Activated CD4-positive, alpha-beta T cell treated with anti-CD3 and anti-CD28 coated beads for 36 hours (primary cell): ENCODE measurements at regions of chr7 and their contacts with region 1.

Region 1: DNA sequence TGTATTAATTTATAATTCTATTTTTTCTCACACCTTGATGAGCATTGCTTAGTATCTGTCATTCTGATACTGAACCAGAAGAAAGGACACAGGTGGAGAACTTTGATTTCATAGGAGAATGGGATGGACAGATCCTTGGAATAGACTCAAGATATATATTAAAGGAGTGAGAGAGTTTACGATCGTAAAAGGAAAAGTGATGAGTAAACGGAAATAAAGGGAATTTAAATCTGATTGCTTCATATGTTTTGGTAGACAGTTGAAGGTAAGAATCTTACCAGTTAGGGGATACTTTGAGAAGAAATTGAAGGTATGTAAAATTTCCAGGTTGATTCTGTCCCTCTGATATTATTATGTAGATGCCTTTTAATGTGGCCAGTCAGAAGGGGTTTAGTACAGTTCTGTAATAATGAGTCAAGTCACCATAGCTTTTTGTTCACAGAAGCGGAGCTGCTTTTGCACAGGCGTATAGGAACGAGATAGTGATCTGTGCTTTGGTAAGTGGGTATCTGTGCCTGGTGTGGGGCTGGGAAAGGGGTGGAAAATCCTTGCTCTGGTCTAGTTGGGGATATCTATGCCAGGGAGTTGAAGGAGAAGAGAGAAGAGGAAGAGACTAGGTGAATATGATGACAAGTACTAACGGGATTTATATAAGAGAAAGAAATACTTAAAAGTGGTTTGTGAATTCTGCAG is 15.4 kb downstream of the SP4 start:
- DNase-seq: no peak
- ATAC-seq: no peak
- H3K4me3 Mint-ChIP-seq: no peak overlapping the region
- H3K27ac Mint-ChIP-seq: no peak overlapping the region
- H3K4me1 Mint-ChIP-seq: peaks cover 37% of the 10 kb centered on the region
- H3K27me3 Mint-ChIP-seq: no peaks in the 10 kb centered on the region

Region 2: DNA sequence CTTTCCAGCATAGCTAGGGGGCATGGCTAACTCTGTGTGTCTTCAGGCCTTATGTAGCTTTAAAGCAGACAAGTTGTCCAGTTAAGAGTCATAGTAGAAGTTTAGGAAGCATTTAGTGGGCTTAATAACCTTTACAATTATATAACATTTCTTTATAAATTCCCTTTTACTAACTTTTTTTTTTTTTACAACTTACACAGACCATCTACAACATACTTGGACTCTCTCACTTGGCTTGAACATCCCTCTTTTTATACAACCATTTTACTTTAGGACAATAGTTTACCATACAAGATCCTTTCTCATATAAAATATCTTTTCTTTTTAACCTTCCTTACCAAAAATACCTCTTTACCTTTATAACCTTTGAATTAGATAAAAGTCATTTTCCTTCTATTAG is 10.9 kb after region 1 on chr7:
- CTCF ChIA-PET with region 1: interaction called, 11 read pairs
- POLR2A ChIA-PET with region 1: no interaction called
- intact Hi-C with region 1: no loop called
- DNase-seq: no peak
- ATAC-seq: no peak
- H3K4me3 Mint-ChIP-seq: no peak overlapping the region
- H3K27ac Mint-ChIP-seq: no peak overlapping the region
- H3K4me1 Mint-ChIP-seq: peaks cover 12% of the 10 kb centered on the region
- H3K27me3 Mint-ChIP-seq: no peaks in the 10 kb centered on the region

Region 3: GRCh38 chr7:21966271-21966670 is 523.0 kb after region 1 on chr7:
- CTCF ChIA-PET with region 1: no interaction called
- POLR2A ChIA-PET with region 1: no interaction called
- intact Hi-C with region 1: no loop called
- DNase-seq: no peak
- ATAC-seq: no peak
- H3K4me3 Mint-ChIP-seq: no peak overlapping the region
- H3K27ac Mint-ChIP-seq: no peak overlapping the region
- H3K4me1 Mint-ChIP-seq: peaks cover 10% of the 10 kb centered on the region
- H3K27me3 Mint-ChIP-seq: no peaks in the 10 kb centered on the region